Activated B cell treated with CpG ODN at 0.5 μM for 24 hours (primary cell): ENCODE measurements at regions of chr4 and their contacts with region 1.

Region 1: GRCh38 chr4:77959566-77960338 is 97.1 kb downstream of the MRPL1 start:
- DNase-seq: no peak
- ATAC-seq: no peak
- H3K4me3 Mint-ChIP-seq: no peak overlapping the region
- H3K27ac Mint-ChIP-seq: no peak overlapping the region
- H3K4me1 Mint-ChIP-seq: no peaks in the 10 kb centered on the region
- H3K27me3 Mint-ChIP-seq: no peaks in the 10 kb centered on the region
- CTCF ChIP-seq: peak; percentile 73

Region 2: GRCh38 chr4:78923464-78924312 is 963.9 kb after region 1 on chr4:
- CTCF ChIA-PET with region 1: interaction called, 6 read pairs
- POLR2A ChIA-PET with region 1: no interaction called
- intact Hi-C with region 1: loop called (anchors 1 kb)
- DNase-seq: no peak
- ATAC-seq: no peak
- H3K4me3 Mint-ChIP-seq: no peak overlapping the region
- H3K27ac Mint-ChIP-seq: no peak overlapping the region
- H3K4me1 Mint-ChIP-seq: peaks cover 6% of the 10 kb centered on the region
- H3K27me3 Mint-ChIP-seq: no peaks in the 10 kb centered on the region
- CTCF ChIP-seq: no peak